Activated naive CD4-positive, alpha-beta T cell treated with anti-CD3 and anti-CD28 coated beads for 36 hours (primary cell): ENCODE measurements at regions of chr7 and their contacts with region 1.

Region 1: GRCh38 chr7:92833024-92833765 is 3.2 kb downstream of the CDK6 start:
- DNase-seq: peak; percentile 94
- H3K4me3 Mint-ChIP-seq: peak overlapping the region; percentile 89
- H3K27ac Mint-ChIP-seq: peak overlapping the region; percentile 98
- H3K4me1 Mint-ChIP-seq: peaks cover 36% of the 10 kb centered on the region
- H3K27me3 Mint-ChIP-seq: peaks cover 5% of the 10 kb centered on the region

Region 2: DNA sequence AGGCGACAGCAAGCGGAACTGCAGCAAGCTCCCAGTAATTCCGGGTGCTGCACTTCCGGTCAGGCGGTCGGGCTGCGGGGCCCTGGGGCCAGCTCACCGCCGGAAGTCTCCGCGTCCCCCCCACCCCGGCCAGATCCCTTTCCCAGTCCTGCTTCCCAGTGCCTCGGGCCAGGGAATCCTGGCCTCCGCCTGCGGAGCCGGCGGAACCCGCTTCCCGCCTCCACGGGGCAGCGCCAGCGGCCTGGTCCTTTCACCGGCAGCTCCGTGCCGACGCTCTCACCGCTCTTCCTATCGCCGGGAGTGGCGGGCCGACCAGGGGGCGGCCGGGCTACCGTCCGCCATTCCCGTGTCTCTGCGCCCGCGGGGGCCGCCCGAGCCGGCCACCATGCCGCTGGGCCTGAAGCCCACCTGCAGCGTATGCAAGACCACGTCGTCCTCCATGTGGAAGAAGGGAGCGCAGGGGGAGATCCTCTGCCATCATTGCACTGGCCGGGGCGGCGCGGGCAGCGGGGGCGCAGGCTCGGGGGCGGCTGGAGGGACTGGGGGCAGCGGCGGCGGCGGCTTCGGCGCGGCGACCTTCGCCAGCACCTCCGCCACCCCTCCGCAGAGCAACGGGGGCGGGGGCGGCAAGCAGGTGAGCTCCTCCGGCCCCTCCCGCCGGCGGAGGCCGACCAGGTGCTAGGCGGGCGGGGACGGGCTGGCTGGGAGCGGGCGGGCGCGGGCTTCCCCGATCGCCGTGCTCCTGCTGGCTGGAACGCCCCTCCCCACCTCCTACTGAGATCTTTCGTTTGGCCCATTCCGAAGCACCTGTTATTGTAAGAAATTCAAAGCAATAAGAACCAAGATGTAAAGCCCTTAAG is 385.6 kb before region 1 on chr7 and contains the start of gene GATAD1:
- CTCF ChIA-PET with region 1: no interaction called
- intact Hi-C with region 1: loop called (anchors 5 kb)
- DNase-seq: peak; percentile 89
- H3K4me3 Mint-ChIP-seq: peak within 1 kb of the TSS; percentile 82
- H3K27ac Mint-ChIP-seq: peak within 1 kb of the TSS; percentile 84
- H3K4me1 Mint-ChIP-seq: peaks cover 12% of the 10 kb centered on the region
- H3K27me3 Mint-ChIP-seq: no peaks in the 10 kb centered on the region
- total RNA-seq, gene GATAD1: 27.5 to 29.6 TPM

Region 3: GRCh38 chr7:92567460-92567859 is 265.7 kb before region 1 on chr7:
- CTCF ChIA-PET with region 1: no interaction called
- intact Hi-C with region 1: no loop called
- DNase-seq: no peak
- H3K4me3 Mint-ChIP-seq: no peak overlapping the region
- H3K27ac Mint-ChIP-seq: no peak overlapping the region
- H3K4me1 Mint-ChIP-seq: no peaks in the 10 kb centered on the region
- H3K27me3 Mint-ChIP-seq: no peaks in the 10 kb centered on the region

Region 4: DNA sequence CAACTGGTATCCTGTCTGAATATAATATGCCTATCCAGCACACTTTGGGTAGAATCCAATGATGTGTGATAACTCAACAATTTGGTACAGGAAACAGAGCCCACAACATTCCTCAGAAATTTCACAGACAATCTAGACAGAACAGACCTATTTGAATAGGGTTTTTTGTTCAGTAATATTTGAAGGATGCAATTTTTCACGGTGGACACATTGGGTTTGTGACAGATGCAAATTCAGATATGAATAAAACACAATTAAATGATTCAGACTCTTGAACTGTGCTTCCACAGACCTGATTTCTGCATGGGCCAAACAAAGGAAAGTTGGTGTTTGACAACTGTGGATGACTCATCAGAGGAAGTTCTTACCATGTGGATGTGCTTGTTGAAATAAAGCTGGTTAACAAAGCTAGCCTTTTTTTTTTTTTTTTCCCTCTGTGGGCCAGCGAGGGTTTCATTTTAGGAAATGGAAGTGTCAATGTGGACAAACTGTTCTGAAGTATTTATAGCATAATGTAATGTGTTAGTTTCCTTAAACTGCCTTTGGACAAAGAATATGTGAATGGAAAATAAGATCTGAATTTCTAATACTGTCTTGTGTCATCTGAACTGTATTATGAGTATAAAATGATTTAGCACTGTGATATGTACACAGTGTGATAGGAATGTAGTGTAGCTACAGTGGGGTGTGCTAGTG is 199.8 kb before region 1 on chr7:
- CTCF ChIA-PET with region 1: interaction called, 9 read pairs
- intact Hi-C with region 1: loop called (anchors 2 kb)
- DNase-seq: peak; percentile 49
- H3K4me3 Mint-ChIP-seq: no peak overlapping the region
- H3K27ac Mint-ChIP-seq: peak overlapping the region; percentile 92
- H3K4me1 Mint-ChIP-seq: peaks cover 84% of the 10 kb centered on the region
- H3K27me3 Mint-ChIP-seq: no peaks in the 10 kb centered on the region

Region 5: DNA sequence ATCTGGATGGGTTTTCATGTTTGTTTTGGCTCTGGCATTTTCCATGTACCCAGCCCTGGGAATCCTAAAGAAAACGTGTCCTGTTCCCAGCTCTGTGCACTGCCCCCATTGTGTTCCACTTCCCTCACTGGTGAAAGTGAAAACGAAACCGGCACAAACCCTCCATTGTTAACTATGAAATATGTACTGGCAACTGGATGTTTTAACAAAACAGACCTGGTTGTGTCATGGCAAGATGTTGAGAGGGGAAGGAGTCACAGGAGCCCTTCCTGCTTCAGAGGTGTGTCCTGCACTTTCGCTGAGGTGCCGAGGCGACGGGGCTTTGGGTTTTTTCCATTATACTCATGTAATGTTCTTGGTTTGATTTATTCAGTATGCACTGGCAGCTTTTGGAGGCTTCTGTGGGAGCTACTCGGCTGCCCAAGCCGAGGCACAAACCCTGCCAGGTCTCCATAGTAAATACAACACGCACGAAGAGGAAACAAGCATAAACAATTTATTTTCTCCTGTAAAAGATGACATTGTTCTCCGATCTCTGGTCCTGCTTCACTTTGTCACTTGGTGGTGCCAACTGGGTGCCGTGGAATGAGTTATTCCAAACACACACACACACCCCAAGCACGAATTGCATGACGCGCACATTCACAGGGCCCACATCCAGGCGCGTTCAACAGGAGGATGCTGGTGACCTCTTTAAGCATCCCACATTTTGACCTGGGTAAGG is 115.0 kb before region 1 on chr7:
- CTCF ChIA-PET with region 1: interaction called, 4 read pairs
- intact Hi-C with region 1: loop called (anchors 1 kb)
- DNase-seq: peak; percentile 82
- H3K4me3 Mint-ChIP-seq: peak overlapping the region; percentile 79
- H3K27ac Mint-ChIP-seq: peak overlapping the region; percentile 93
- H3K4me1 Mint-ChIP-seq: peaks cover 74% of the 10 kb centered on the region
- H3K27me3 Mint-ChIP-seq: no peaks in the 10 kb centered on the region

Region 6: DNA sequence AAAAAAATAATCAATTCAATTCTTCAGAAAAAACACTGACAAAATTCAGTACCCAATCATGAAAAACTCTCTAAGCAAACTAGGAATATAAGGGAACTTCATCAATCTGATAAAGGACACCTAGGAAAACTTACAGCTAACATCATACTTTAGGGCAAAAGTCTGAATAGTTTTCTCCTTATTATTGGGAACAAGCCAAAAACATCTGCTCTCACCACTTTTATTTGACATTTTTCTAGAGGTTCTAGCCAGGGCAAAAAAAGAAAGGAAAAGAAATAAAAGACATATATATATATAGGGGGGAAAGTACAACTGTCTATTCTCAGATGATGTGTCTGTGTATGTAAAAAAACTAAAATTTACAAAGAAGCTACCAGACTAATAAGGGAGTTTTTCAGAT is 15.8 kb before region 1 on chr7:
- CTCF ChIA-PET with region 1: interaction called, 33 read pairs
- intact Hi-C with region 1: loop called (anchors 1 kb)
- DNase-seq: no peak
- H3K4me3 Mint-ChIP-seq: no peak overlapping the region
- H3K27ac Mint-ChIP-seq: no peak overlapping the region
- H3K4me1 Mint-ChIP-seq: peaks cover 79% of the 10 kb centered on the region
- H3K27me3 Mint-ChIP-seq: no peaks in the 10 kb centered on the region

Region 7: GRCh38 chr7:93117852-93118530 is 284.8 kb after region 1 on chr7 and contains the start of gene SAMD9:
- CTCF ChIA-PET with region 1: no interaction called
- intact Hi-C with region 1: loop called (anchors 5 kb)
- DNase-seq: peak; percentile 70
- H3K4me3 Mint-ChIP-seq: peak within 1 kb of the TSS; percentile 71
- H3K27ac Mint-ChIP-seq: peak within 1 kb of the TSS; percentile 65
- H3K4me1 Mint-ChIP-seq: peaks cover 47% of the 10 kb centered on the region
- H3K27me3 Mint-ChIP-seq: no peaks in the 10 kb centered on the region
- total RNA-seq, gene SAMD9: 2.9 to 3.1 TPM

Region 8: DNA sequence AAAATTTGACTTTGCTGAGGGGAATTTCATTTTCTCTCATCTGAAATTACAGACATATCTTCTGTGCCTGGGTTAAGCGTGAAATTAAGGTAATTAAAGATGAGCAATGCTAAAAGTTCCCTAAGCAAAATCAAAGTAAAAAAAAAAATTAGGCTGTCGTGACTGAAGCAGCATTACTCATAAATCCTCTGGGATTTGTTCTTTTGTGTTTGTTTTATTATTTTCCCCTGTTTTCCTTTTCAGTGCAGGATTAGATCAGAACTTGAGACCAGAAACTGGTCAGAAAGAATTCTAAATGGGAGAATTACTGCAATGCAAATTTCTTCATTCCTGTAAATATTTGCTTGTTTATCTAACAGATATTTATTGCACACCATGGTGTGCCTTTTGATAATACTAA is 1312.4 kb after region 1 on chr7:
- CTCF ChIA-PET with region 1: no interaction called
- intact Hi-C with region 1: no loop called
- DNase-seq: no peak
- H3K4me3 Mint-ChIP-seq: no peak overlapping the region
- H3K27ac Mint-ChIP-seq: no peak overlapping the region
- H3K4me1 Mint-ChIP-seq: no peaks in the 10 kb centered on the region
- H3K27me3 Mint-ChIP-seq: peaks cover 11% of the 10 kb centered on the region